K562 (cell line): ENCODE measurements at regions of chr5 and their contacts with region 1.

Region 1: GRCh38 chr5:98963019-98963418 is 34.2 kb upstream of the CHD1 start:
- DNase-seq: no peak
- ATAC-seq: no peak
- H3K4me3 ChIP-seq: no peak overlapping the region
- H3K27ac ChIP-seq: peak overlapping the region; percentile 3; the same call in 1 of the 3 replicates
- H3K4me1 ChIP-seq: peaks cover 9 to 29% of the 10 kb centered on the region in 2 experiments
- H3K27me3 ChIP-seq: no peaks in the 10 kb centered on the region
- CTCF ChIP-seq: no peak
- EP300 ChIP-seq: no peak
- POLR2A ChIP-seq: no peak
- RAD21 ChIP-seq: no peak

Region 2: DNA sequence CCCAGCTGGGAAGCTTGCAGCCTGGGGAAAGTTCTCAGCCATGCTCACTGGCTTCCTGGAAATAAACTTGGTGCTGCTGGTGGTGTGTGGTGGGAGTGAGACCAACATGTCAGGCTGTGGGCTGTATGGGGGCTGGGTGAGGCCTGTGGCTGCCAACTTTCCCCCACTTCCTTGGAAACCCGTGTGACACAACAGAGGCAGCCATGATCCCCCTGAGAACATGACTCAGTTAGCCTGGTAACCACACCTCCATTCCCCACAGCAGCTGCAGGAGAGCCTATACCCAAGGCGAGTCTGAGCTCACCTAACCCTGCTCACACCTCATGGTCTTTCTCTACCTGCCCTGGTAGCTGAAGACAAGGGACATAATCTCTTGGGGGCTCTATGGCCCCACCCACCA is 262.3 kb before region 1 on chr5:
- CTCF ChIA-PET with region 1: no interaction called
- POLR2A ChIA-PET with region 1: no interaction called
- in situ Hi-C with region 1: no loop called
- intact Hi-C with region 1: no loop called
- DNase-seq: no peak
- ATAC-seq: no peak
- H3K4me3 ChIP-seq: no peak overlapping the region
- H3K27ac ChIP-seq: no peak overlapping the region
- H3K4me1 ChIP-seq: no peaks in the 10 kb centered on the region
- H3K27me3 ChIP-seq: no peaks in the 10 kb centered on the region
- CTCF ChIP-seq: no peak
- EP300 ChIP-seq: no peak
- POLR2A ChIP-seq: no peak
- RAD21 ChIP-seq: no peak

Region 3: DNA sequence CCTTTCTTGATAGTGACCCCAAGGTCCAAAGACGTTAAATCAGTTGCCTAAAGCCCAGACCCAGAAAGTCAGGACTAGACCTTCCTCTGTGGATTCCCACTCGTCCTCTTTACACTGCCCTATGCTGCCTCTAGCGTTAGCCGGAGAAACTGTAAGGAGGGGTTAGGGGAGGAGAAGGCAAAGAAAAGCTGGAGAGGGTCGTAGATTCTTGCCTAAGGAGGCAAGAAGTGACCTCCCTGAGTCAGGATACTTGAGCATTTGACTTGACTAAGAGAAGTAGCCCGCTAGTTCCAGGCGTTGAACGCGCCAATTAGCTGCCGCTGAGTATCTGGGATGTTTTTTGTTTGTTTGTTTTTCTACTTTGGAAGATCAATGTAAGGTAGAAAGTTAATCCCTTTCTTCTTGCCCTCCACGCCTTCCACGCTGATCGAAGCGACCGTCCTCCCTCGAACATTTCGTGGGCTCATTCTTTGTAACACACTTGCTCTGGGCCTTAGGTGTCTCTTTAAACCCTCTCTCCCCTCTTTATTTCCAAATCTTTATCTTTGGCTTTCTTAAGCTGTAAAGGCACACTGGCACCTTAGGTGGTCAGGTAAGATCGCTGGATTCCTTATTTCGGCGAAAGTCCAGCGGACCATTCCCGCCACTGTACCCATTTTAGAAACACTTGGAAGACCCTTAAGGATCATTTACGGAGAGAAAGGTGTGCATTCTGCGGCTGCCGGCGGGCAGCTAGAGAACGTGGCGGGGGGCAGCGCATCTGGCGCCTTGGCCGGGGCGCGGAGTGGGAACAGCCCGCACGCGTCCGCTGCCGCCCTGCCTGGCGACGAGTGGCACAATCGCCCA is 194.6 kb before region 1 on chr5:
- CTCF ChIA-PET with region 1: no interaction called
- POLR2A ChIA-PET with region 1: no interaction called
- in situ Hi-C with region 1: no loop called
- intact Hi-C with region 1: no loop called
- DNase-seq: peak; percentile 29 to 47 (median 42)
- ATAC-seq: peak; percentile 81
- H3K4me3 ChIP-seq: no peak overlapping the region
- H3K27ac ChIP-seq: no peak overlapping the region
- H3K4me1 ChIP-seq: peaks cover 0 to 22% of the 10 kb centered on the region in 2 experiments; a peak in 2 of 5 replicates
- H3K27me3 ChIP-seq: peaks cover 0 to 22% of the 10 kb centered on the region in 2 experiments; a peak in 3 of 5 replicates
- CTCF ChIP-seq: peak; percentile 55 to 79 (median 55)
- EP300 ChIP-seq: no peak
- POLR2A ChIP-seq: no peak
- RAD21 ChIP-seq: peak in 1 of 2 experiments; percentile 40; a peak in 2 of 4 replicates

Region 4: GRCh38 chr5:98905857-98906690 is 56.9 kb before region 1 on chr5:
- CTCF ChIA-PET with region 1: no interaction called
- POLR2A ChIA-PET with region 1: no interaction called
- in situ Hi-C with region 1: no loop called
- intact Hi-C with region 1: loop called (anchors 5 kb)
- DNase-seq: peak in 3 of 4 experiments; percentile 11 to 56 (median 15)
- ATAC-seq: peak; percentile 75
- H3K4me3 ChIP-seq: no peak overlapping the region
- H3K27ac ChIP-seq: no peak overlapping the region
- H3K4me1 ChIP-seq: no peaks in the 10 kb centered on the region
- H3K27me3 ChIP-seq: no peaks in the 10 kb centered on the region
- CTCF ChIP-seq: peak in 2 of 3 experiments; percentile 43 to 75; a peak in 4 of 6 replicates
- EP300 ChIP-seq: no peak
- POLR2A ChIP-seq: no peak
- RAD21 ChIP-seq: peak; percentile 92 to 94